Mammary epithelial cell (primary cell): ENCODE measurements at regions of chr6 and their contacts with region 1.

Region 1: DNA sequence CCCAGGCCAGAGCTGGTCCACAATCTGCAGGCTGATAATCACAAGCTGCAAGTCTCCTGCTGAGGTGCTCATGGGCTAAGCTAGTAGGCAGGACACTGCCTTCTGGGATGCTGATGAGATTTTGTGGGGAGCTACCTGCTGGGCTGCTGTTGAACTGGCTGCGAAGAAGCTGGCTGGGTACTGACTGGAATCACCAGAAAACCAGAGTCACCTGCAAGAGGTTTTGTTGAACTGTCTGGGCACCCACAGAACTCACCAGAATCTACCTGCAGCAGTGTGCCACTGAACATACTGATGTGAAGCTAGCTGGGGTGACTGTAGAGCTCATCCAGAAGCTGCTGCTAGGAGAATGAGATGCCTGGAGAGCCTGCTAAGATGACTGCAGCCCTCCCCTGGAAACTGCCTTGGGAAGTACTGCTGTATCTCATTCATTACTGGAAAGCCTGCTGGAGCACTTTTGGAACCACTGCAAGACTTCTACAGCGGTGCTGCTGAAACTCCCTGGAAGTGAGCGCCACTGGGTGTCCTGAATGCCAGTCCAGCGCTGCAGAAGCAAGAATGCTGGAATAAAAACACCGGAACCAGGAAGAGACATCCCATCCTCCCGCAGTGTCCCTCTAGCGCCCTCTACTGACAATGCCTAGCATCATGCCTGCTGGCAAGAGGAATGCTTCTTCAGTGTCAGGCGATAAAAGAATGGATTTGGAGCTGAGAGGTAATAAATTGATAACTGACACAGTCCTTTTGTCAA is 64.9 kb upstream of the ARHGAP18 start:
- DNase-seq: peak; percentile 53
- H3K4me3 ChIP-seq: no peak overlapping the region
- H3K27ac ChIP-seq: no peak overlapping the region
- H3K4me1 ChIP-seq: no peaks in the 10 kb centered on the region
- H3K27me3 ChIP-seq: no peaks in the 10 kb centered on the region
- CTCF ChIP-seq: peak; percentile 99

Region 2: DNA sequence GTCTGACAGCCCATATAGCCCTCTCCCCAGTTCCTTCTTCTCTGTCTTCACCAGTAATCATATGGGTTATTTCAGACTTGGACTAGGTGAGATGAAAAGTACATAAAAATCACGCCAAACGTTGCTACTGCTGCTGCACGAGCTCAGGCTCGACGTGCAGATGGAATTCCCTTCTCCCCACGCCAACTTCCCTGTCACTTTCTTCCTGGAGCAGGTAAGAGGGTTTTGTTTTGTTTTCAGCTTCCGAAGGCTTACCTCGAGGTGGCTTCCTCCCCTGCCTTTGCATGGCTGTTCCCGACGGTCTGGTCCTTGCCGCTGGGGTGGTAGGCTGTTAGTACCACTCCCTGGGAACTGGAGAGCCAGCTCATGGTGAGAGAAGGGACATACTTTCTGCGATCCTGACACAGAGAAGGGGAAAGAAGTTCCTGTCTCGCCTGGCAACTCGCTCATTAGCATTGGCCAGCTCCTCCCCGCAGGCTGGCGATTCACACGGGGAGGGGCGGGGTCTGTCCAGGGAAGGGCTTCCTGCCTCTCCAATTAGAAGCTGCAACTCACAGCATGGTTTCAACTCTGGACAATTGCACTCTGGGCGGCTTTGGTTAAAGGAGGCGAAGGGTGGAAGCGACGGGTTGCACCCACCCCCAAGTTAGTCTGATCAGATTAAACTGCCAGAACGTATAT is 65.0 kb before region 1 on chr6 and contains the start of gene ARHGAP18:
- CTCF ChIA-PET with region 1: no interaction called
- dilution Hi-C with region 1: no loop called
- in situ Hi-C with region 1: no loop called
- intact Hi-C with region 1: no loop called
- DNase-seq: peak; percentile 95
- H3K4me3 ChIP-seq: peak within 1 kb of the TSS; percentile 61 to 80 (median 77)
- H3K27ac ChIP-seq: peak within 1 kb of the TSS; percentile 65
- H3K4me1 ChIP-seq: peaks cover 18% of the 10 kb centered on the region
- H3K27me3 ChIP-seq: no peaks in the 10 kb centered on the region
- CTCF ChIP-seq: no peak
- total RNA-seq, gene ARHGAP18: 20.8 to 28.5 TPM

Region 3: GRCh38 chr6:129936329-129937165 is 161.7 kb after region 1 on chr6:
- CTCF ChIA-PET with region 1: no interaction called
- dilution Hi-C with region 1: no loop called
- in situ Hi-C with region 1: no loop called
- intact Hi-C with region 1: loop called (anchors 2 kb)
- DNase-seq: peak; percentile 62
- H3K4me3 ChIP-seq: peak overlapping the region in 1 of 3 experiments; percentile 6
- H3K27ac ChIP-seq: no peak overlapping the region
- H3K4me1 ChIP-seq: no peaks in the 10 kb centered on the region
- H3K27me3 ChIP-seq: no peaks in the 10 kb centered on the region
- CTCF ChIP-seq: peak; percentile 53 to 70

Region 4: DNA sequence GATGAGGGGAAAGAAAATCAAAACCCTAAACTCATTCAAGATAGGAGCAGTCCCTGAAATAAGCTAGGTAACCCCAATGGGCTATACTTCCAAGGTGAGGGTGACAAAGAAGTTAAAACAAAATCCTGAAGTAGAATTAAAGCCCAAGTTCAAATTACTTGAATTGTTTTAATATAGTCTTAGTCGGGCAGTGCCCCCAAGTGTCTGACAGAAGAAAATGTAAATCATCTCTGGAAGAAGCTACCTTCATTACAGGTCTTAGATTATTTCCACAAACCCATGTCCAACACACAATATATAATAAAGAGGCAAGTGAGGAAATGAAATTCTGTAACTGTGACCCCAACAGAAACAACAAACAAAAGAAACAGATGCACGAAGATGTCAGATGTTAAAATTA is 206.7 kb after region 1 on chr6:
- CTCF ChIA-PET with region 1: no interaction called
- dilution Hi-C with region 1: no loop called
- in situ Hi-C with region 1: no loop called
- intact Hi-C with region 1: loop called (anchors 2 kb)
- DNase-seq: peak; percentile 2
- H3K4me3 ChIP-seq: no peak overlapping the region
- H3K27ac ChIP-seq: no peak overlapping the region
- H3K4me1 ChIP-seq: no peaks in the 10 kb centered on the region
- H3K27me3 ChIP-seq: no peaks in the 10 kb centered on the region
- CTCF ChIP-seq: peak; percentile 29 to 50

Region 5: GRCh38 chr6:130178692-130179091 is 403.8 kb after region 1 on chr6:
- CTCF ChIA-PET with region 1: interaction called, 12 read pairs
- dilution Hi-C with region 1: no loop called
- in situ Hi-C with region 1: no loop called
- intact Hi-C with region 1: no loop called
- DNase-seq: peak; percentile 85
- H3K4me3 ChIP-seq: no peak overlapping the region
- H3K27ac ChIP-seq: no peak overlapping the region
- H3K4me1 ChIP-seq: peaks cover 10% of the 10 kb centered on the region
- H3K27me3 ChIP-seq: no peaks in the 10 kb centered on the region
- CTCF ChIP-seq: no peak